Mammary epithelial cell (primary cell): ENCODE measurements at regions of chr15 and their contacts with region 1.

Region 1: DNA sequence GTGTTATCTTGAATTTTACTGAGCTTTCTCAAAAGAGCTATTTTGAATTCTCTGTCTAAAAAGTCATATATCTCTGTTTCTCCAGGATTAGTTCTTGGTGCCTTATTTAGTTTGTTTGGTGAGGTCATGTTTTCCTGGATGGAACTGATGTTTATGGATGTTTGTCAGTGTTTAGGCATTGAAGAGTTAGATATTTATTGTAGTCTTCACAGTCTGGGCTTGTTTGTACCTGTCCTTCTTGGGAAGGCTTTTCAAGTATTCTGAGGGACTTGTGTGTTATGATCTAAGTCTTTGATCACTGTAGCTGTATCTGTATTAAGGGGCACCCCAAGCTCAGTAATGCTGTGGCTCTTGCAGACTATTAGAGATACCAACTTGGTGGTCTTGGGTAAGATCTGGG is 10.6 kb upstream of the RAD51 start:
- DNase-seq: peak; percentile 32
- H3K4me3 ChIP-seq: no peak overlapping the region
- H3K27ac ChIP-seq: no peak overlapping the region
- H3K4me1 ChIP-seq: peaks cover 8% of the 10 kb centered on the region
- H3K27me3 ChIP-seq: no peaks in the 10 kb centered on the region
- CTCF ChIP-seq: no peak

Region 2: GRCh38 chr15:40454904-40455391 is 229.4 kb before region 1 on chr15:
- CTCF ChIA-PET with region 1: no interaction called
- dilution Hi-C with region 1: no loop called
- in situ Hi-C with region 1: no loop called
- intact Hi-C with region 1: no loop called
- DNase-seq: peak; percentile 58
- H3K4me3 ChIP-seq: no peak overlapping the region
- H3K27ac ChIP-seq: no peak overlapping the region
- H3K4me1 ChIP-seq: peaks cover 33% of the 10 kb centered on the region
- H3K27me3 ChIP-seq: no peaks in the 10 kb centered on the region
- CTCF ChIP-seq: no peak

Region 3: GRCh38 chr15:40743921-40744814 is 59.8 kb after region 1 on chr15:
- CTCF ChIA-PET with region 1: no interaction called
- dilution Hi-C with region 1: no loop called
- in situ Hi-C with region 1: no loop called
- intact Hi-C with region 1: loop called (anchors 1 kb)
- DNase-seq: peak; percentile 78
- H3K4me3 ChIP-seq: no peak overlapping the region
- H3K27ac ChIP-seq: no peak overlapping the region
- H3K4me1 ChIP-seq: peaks cover 10% of the 10 kb centered on the region
- H3K27me3 ChIP-seq: no peaks in the 10 kb centered on the region
- CTCF ChIP-seq: no peak

Region 4: GRCh38 chr15:40793216-40793989 is 109.0 kb after region 1 on chr15:
- CTCF ChIA-PET with region 1: interaction called, 10 read pairs
- dilution Hi-C with region 1: no loop called
- in situ Hi-C with region 1: no loop called
- intact Hi-C with region 1: no loop called
- DNase-seq: peak; percentile 96
- H3K4me3 ChIP-seq: no peak overlapping the region
- H3K27ac ChIP-seq: peak overlapping the region; percentile 44
- H3K4me1 ChIP-seq: peaks cover 17% of the 10 kb centered on the region
- H3K27me3 ChIP-seq: no peaks in the 10 kb centered on the region
- CTCF ChIP-seq: no peak

Region 5: DNA sequence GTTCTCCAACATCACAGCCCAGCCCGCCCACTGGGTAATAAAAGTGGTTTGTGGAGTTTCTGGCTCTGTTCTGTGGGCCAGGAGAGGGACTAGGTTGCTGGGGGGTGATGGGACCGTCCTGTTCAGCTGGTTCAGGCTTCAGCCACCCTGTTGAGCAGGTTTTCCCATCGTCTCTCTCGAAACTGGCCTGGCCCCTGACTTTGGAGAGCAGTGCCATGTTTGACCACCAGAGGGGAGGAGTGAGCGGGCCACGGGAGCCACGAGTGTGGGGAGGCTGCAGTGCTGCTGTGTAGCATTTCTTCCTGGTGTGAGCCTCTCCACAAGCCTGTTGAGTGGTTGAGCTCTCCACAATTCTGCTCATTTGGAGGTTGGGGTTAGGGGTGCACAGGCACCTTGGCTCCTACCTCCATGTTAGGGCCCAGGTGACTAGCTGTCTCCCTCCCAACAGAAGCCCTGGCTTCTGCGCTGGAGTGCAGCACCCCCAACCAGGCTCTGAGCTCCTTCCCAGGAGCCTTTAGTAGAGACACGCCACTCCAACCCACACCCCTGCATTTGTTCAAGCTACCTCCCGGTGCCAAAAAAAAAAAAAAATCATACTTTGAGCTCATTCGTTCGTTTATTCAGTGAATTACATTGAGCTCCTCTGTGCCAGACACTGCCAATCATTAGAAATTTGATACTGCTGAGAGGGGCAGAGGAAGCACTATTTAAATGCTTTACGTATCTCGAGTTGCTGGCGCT is 173.4 kb after region 1 on chr15:
- CTCF ChIA-PET with region 1: no interaction called
- dilution Hi-C with region 1: no loop called
- in situ Hi-C with region 1: no loop called
- intact Hi-C with region 1: loop called (anchors 2 kb)
- DNase-seq: peak; percentile 79
- H3K4me3 ChIP-seq: no peak overlapping the region
- H3K27ac ChIP-seq: peak overlapping the region; percentile 40
- H3K4me1 ChIP-seq: no peaks in the 10 kb centered on the region
- H3K27me3 ChIP-seq: no peaks in the 10 kb centered on the region
- CTCF ChIP-seq: peak; percentile 98 to 99